ENCODE measurements at regions of chr4 and their contacts with region 1.

Region 1: DNA sequence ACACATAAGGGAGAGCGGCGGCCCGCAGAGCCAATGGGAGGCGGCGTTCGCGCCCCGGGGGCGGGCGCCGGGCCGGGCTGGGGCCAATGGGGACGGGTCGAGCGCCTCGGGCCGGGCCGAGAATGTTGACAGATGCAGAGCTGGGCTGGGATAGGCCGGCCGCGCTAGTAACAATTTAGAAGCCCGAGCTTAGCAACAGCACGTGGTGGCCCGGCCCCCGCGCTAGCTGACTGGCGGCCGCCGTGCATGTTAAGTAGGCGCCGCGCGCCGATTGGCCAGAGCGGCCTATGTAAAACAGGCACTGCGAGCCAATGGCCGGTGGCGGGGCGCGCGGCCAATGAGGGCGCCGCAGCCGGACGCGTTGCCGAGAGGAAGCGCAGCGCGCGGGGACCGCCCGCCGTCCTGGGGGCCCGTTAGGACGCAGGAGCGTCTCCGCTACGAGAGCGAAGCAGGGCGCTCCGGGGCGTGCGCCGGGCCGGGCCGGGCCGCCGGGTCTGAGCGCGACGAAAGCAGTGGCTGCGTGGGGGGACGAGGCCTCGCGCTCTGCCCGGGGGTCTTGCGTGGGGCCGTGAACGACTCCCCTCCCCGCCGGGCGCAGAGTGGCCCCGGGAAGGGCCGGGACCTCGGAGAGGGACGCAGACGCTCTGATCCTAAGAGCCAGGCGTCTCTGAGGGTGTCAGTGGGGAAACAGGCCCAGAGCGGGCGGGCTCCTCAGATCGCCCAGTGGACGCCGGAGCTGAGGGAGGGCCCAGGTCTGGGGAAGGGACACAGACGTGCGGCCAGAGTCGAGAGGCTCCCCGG is 434 bp upstream of the MXD4 start:
- DNase-seq: peak; percentile 99
- ATAC-seq: peak; percentile 87
- H3K4me3 ChIP-seq: peak overlapping the region in 4 of 5 experiments; percentile 63 to 80 (median 73)
- H3K4me3 Mint-ChIP-seq: peak overlapping the region; percentile 76
- H3K27ac ChIP-seq: peak overlapping the region; percentile 94 to 98
- H3K27ac Mint-ChIP-seq: peak overlapping the region; percentile 92
- H3K4me1 ChIP-seq: peaks cover 23 to 47% of the 10 kb centered on the region in 2 donors
- H3K4me1 Mint-ChIP-seq: peaks cover 20% of the 10 kb centered on the region
- H3K27me3 ChIP-seq: no peaks in the 10 kb centered on the region
- H3K27me3 Mint-ChIP-seq: no peaks in the 10 kb centered on the region
- CTCF ChIP-seq: no peak

Region 2: DNA sequence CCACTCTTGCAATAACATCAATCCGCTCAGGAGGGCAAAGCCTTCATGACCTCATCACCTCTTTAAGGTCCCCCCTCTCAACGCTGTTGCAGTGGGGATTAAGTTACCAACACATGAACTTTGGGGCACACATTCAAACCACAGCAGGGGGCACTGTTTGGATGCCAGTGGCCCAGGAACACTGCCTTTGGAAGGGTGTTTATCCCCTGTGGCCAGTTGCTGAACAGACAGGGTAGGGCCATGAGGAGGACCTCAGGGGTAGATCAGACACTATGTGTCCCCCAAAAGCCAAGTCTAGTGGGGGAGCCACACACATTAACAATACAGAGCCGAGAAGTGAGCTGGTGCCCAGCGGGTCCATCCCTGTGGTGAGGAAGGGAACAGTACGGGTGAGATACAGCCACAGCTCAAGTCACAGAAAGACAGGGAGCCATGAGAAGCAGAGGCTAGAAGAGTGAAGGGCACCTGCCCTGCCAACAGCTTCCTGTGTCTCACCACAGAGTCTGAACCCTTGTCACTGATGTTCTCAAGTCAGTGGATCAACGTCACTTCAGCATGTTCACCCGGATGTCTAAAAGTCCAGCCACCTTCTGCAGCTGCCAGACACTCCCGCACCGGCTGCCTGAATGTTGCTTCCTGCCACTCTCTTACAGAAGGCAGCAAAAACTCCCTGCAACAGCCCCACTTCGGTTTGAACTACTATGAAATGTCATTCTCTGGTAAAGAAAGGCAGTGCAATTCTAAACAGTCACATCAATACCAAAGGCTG is 19.4 kb after region 1 on chr4:
- CTCF ChIA-PET with region 1: interaction called, 4 read pairs
- POLR2A ChIA-PET with region 1: interaction called, 10 read pairs
- intact Hi-C with region 1: loop called (anchors 1 kb)
- DNase-seq: peak; percentile 90
- ATAC-seq: peak; percentile 92
- H3K4me3 ChIP-seq: no peak overlapping the region
- H3K4me3 Mint-ChIP-seq: peak overlapping the region; percentile 87
- H3K27ac ChIP-seq: peak overlapping the region; percentile 54 to 83
- H3K27ac Mint-ChIP-seq: peak overlapping the region; percentile 99
- H3K4me1 ChIP-seq: peaks cover 18 to 21% of the 10 kb centered on the region in 2 donors
- H3K4me1 Mint-ChIP-seq: peaks cover 33% of the 10 kb centered on the region
- H3K27me3 ChIP-seq: no peaks in the 10 kb centered on the region
- H3K27me3 Mint-ChIP-seq: no peaks in the 10 kb centered on the region
- CTCF ChIP-seq: peak; percentile 76

Region 3: GRCh38 chr4:2290974-2291704 is 28.8 kb after region 1 on chr4:
- CTCF ChIA-PET with region 1: interaction called, 3 read pairs
- POLR2A ChIA-PET with region 1: interaction called, 12 read pairs
- intact Hi-C with region 1: no loop called
- DNase-seq: peak; percentile 75
- ATAC-seq: peak; percentile 75
- H3K4me3 ChIP-seq: peak overlapping the region in 3 of 5 experiments; percentile 33 to 34 (median 34)
- H3K4me3 Mint-ChIP-seq: peak overlapping the region; percentile 77
- H3K27ac ChIP-seq: peak overlapping the region in 1 of 2 donors; percentile 49
- H3K27ac Mint-ChIP-seq: peak overlapping the region; percentile 81
- H3K4me1 ChIP-seq: peaks cover 18 to 20% of the 10 kb centered on the region in 2 donors
- H3K4me1 Mint-ChIP-seq: peaks cover 22% of the 10 kb centered on the region
- H3K27me3 ChIP-seq: peaks cover 0 to 8% (median 3%) of the 10 kb centered on the region in 4 experiments
- H3K27me3 Mint-ChIP-seq: no peaks in the 10 kb centered on the region
- CTCF ChIP-seq: no peak

Region 4: GRCh38 chr4:2320152-2320551 is 57.8 kb after region 1 on chr4:
- CTCF ChIA-PET with region 1: no interaction called
- POLR2A ChIA-PET with region 1: interaction called, 10 read pairs
- intact Hi-C with region 1: no loop called
- DNase-seq: no peak
- ATAC-seq: no peak
- H3K4me3 ChIP-seq: no peak overlapping the region
- H3K4me3 Mint-ChIP-seq: no peak overlapping the region
- H3K27ac ChIP-seq: no peak overlapping the region
- H3K27ac Mint-ChIP-seq: no peak overlapping the region
- H3K4me1 ChIP-seq: no peaks in the 10 kb centered on the region
- H3K4me1 Mint-ChIP-seq: peaks cover 1% of the 10 kb centered on the region
- H3K27me3 ChIP-seq: peaks cover 0 to 7% (median 0%) of the 10 kb centered on the region in 4 experiments
- H3K27me3 Mint-ChIP-seq: peaks cover 15% of the 10 kb centered on the region
- CTCF ChIP-seq: no peak

Region 5: GRCh38 chr4:2333356-2333841 is 71.1 kb after region 1 on chr4:
- CTCF ChIA-PET with region 1: no interaction called
- POLR2A ChIA-PET with region 1: no interaction called
- intact Hi-C with region 1: loop called (anchors 1 kb)
- DNase-seq: peak; percentile 46
- ATAC-seq: peak; percentile 74
- H3K4me3 ChIP-seq: no peak overlapping the region
- H3K4me3 Mint-ChIP-seq: peak overlapping the region; percentile 53
- H3K27ac ChIP-seq: no peak overlapping the region
- H3K27ac Mint-ChIP-seq: peak overlapping the region; percentile 70
- H3K4me1 ChIP-seq: peaks cover 12 to 14% of the 10 kb centered on the region in 2 donors
- H3K4me1 Mint-ChIP-seq: peaks cover 15% of the 10 kb centered on the region
- H3K27me3 ChIP-seq: peaks cover 0 to 18% (median 0%) of the 10 kb centered on the region in 4 experiments
- H3K27me3 Mint-ChIP-seq: peaks cover 5% of the 10 kb centered on the region
- CTCF ChIP-seq: no peak

Region 6: GRCh38 chr4:2689825-2690700 is 427.7 kb after region 1 on chr4:
- CTCF ChIA-PET with region 1: no interaction called
- POLR2A ChIA-PET with region 1: no interaction called
- intact Hi-C with region 1: loop called (anchors 10 kb)
- DNase-seq: peak; percentile 90
- ATAC-seq: peak; percentile 91
- H3K4me3 ChIP-seq: peak overlapping the region in 3 of 5 experiments; percentile 17 to 34 (median 18)
- H3K4me3 Mint-ChIP-seq: peak overlapping the region; percentile 81
- H3K27ac ChIP-seq: peak overlapping the region; percentile 77 to 88
- H3K27ac Mint-ChIP-seq: peak overlapping the region; percentile 92
- H3K4me1 ChIP-seq: peaks cover 44 to 46% of the 10 kb centered on the region in 2 donors
- H3K4me1 Mint-ChIP-seq: peaks cover 60% of the 10 kb centered on the region
- H3K27me3 ChIP-seq: no peaks in the 10 kb centered on the region
- H3K27me3 Mint-ChIP-seq: no peaks in the 10 kb centered on the region
- CTCF ChIP-seq: no peak